ENCODE measurements at regions of chr3 and their contacts with region 1.

Region 1: GRCh38 chr3:65672871-65673815 is 365.6 kb downstream of the MAGI1 start:
- DNase-seq: peak; percentile 5 to 38
- ATAC-seq: peak in 1 of 2 donors; percentile 39
- H3K4me3 ChIP-seq: no peak overlapping the region
- H3K27ac ChIP-seq: no peak overlapping the region
- H3K4me1 ChIP-seq: no peaks in the 10 kb centered on the region
- H3K27me3 ChIP-seq: no peaks in the 10 kb centered on the region
- CTCF ChIP-seq: peak; percentile 56 to 87 (median 76)
- POLR2A ChIP-seq: no peak

Region 2: DNA sequence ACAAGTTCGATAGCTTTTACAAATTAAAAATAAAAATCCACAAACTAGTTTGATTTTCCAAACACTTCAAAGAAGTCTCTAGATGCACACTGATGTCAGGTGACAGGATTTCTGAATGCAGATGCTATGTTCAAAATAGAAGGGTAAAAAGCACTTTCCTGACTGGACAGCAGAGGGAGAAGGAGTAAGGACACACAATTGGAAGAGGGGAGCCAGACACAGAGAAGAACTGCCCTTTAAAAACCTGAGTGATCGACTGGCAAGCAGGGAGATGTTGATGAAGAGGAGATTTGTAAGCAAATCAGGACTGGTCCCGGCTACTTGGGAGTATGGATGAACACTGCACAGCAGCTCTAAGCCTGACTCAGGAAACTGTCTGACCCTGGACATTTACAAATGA is 247.3 kb before region 1 on chr3:
- in situ Hi-C with region 1: loop called in 2 of 4 experiments (anchors 10 kb)
- intact Hi-C with region 1: no loop called
- DNase-seq: no peak
- ATAC-seq: no peak
- H3K4me3 ChIP-seq: no peak overlapping the region
- H3K27ac ChIP-seq: no peak overlapping the region
- H3K4me1 ChIP-seq: peaks cover 0 to 13% of the 10 kb centered on the region in 2 donors
- H3K27me3 ChIP-seq: no peaks in the 10 kb centered on the region
- CTCF ChIP-seq: peak in 1 of 5 experiments; percentile 27
- POLR2A ChIP-seq: no peak

Region 3: GRCh38 chr3:65732051-65732935 is 59.1 kb after region 1 on chr3:
- in situ Hi-C with region 1: no loop called
- intact Hi-C with region 1: no loop called
- DNase-seq: no peak
- ATAC-seq: peak; percentile 79 to 87
- H3K4me3 ChIP-seq: no peak overlapping the region
- H3K27ac ChIP-seq: no peak overlapping the region
- H3K4me1 ChIP-seq: peaks cover 11 to 14% of the 10 kb centered on the region in 2 donors
- H3K27me3 ChIP-seq: no peaks in the 10 kb centered on the region
- CTCF ChIP-seq: peak in 4 of 5 experiments; percentile 43 to 78 (median 65)
- POLR2A ChIP-seq: no peak

Region 4: DNA sequence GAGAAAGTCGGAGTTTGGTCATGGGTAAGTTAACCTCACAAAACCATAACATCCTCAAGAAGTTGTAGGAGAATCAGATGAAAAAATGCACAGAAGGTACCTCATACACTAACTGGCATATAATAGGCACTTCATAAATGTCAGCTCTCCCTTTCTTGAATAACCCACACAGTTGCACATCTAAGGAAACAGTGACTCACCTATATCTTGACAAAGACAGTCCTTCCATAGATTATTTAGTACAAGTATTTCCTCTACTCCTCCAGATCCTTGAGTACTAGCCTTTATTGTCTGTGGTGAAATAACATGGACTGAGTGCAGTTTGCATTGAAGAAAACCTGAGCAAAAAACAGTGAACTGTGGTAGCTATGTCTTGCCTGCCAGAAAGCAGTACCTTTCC is 319.0 kb after region 1 on chr3:
- in situ Hi-C with region 1: no loop called
- intact Hi-C with region 1: no loop called
- DNase-seq: no peak
- ATAC-seq: no peak
- H3K4me3 ChIP-seq: no peak overlapping the region
- H3K27ac ChIP-seq: no peak overlapping the region
- H3K4me1 ChIP-seq: peaks cover 0 to 20% of the 10 kb centered on the region in 2 donors
- H3K27me3 ChIP-seq: no peaks in the 10 kb centered on the region
- CTCF ChIP-seq: no peak
- POLR2A ChIP-seq: no peak

Region 5: DNA sequence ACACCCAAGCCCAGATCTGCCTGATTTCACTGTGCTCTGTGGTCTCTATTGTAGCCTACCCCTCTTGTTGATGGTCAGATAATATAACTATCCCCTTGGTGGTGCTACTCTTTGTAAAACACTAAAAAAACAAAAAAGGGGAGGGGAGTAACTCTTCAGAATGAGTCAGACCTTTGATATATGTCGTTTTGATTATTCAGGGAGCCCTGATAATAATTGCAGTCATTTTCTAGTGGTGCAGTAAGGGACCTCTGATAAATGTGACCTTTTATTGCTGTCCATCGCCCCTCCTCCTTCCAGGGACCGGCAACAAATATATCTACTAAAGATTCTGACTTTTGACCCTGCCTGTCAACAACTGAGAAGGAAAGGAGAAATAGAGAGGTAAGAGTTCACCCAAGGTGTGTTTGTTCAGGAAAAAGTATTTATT is 410.7 kb after region 1 on chr3:
- in situ Hi-C with region 1: no loop called
- intact Hi-C with region 1: no loop called
- DNase-seq: no peak
- ATAC-seq: no peak
- H3K4me3 ChIP-seq: no peak overlapping the region
- H3K27ac ChIP-seq: no peak overlapping the region
- H3K4me1 ChIP-seq: no peaks in the 10 kb centered on the region
- H3K27me3 ChIP-seq: no peaks in the 10 kb centered on the region
- CTCF ChIP-seq: no peak
- POLR2A ChIP-seq: no peak

Measured in gastrocnemius medialis (tissue), 4 donors.